Activated B cell treated with CpG ODN at 0.5 μM for 24 hours (primary cell): ENCODE measurements at regions of chr3 and their contacts with region 1.

Region 1: GRCh38 chr3:62509956-62510355 is 136.6 kb upstream of the FEZF2 start:
- DNase-seq: no peak
- ATAC-seq: no peak
- H3K4me3 Mint-ChIP-seq: no peak overlapping the region
- H3K27ac Mint-ChIP-seq: no peak overlapping the region
- H3K4me1 Mint-ChIP-seq: no peaks in the 10 kb centered on the region
- H3K27me3 Mint-ChIP-seq: no peaks in the 10 kb centered on the region
- CTCF ChIP-seq: no peak

Region 2: GRCh38 chr3:61701016-61701415 is 808.9 kb before region 1 on chr3:
- CTCF ChIA-PET with region 1: no interaction called
- POLR2A ChIA-PET with region 1: no interaction called
- intact Hi-C with region 1: no loop called
- DNase-seq: no peak
- ATAC-seq: no peak
- H3K4me3 Mint-ChIP-seq: no peak overlapping the region
- H3K27ac Mint-ChIP-seq: no peak overlapping the region
- H3K4me1 Mint-ChIP-seq: no peaks in the 10 kb centered on the region
- H3K27me3 Mint-ChIP-seq: no peaks in the 10 kb centered on the region
- CTCF ChIP-seq: no peak

Region 3: DNA sequence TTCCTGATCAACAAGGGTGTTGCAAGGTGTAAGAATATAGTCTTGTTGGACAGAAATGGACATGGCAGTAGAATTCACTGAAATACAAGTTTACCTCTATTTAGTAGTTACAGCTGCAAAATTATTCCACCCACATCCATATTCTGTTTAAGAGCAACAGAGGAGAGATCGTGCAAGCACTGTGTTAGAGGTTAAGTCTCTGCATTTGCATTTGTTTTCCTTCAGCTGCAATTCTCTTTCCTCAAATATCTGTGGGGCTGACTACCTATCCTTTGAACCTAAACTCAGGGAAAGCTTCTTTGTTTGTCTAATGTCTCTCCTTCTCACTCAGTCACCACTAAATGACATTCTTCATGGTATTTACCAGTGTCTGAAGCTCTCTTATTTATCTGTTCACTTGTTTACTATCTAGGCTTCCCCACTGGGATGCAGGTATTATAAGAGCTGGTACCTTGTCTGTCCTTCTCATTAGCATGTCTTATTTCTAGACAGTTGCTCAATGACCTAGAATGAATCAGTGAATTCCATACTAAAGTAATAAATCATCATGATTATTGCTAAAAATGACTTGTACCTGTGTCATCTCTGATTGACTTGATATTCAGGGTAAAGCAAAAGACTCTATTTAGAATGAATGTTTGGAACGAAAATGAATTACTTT is 38.7 kb after region 1 on chr3:
- CTCF ChIA-PET with region 1: no interaction called
- POLR2A ChIA-PET with region 1: no interaction called
- intact Hi-C with region 1: loop called (anchors 1 kb)
- DNase-seq: no peak
- ATAC-seq: no peak
- H3K4me3 Mint-ChIP-seq: no peak overlapping the region
- H3K27ac Mint-ChIP-seq: no peak overlapping the region
- H3K4me1 Mint-ChIP-seq: no peaks in the 10 kb centered on the region
- H3K27me3 Mint-ChIP-seq: peaks cover 3% of the 10 kb centered on the region
- CTCF ChIP-seq: no peak